Mucosa of descending colon (tissue), 3 donors: ENCODE measurements at regions of chr14 and their contacts with region 1.

Region 1: DNA sequence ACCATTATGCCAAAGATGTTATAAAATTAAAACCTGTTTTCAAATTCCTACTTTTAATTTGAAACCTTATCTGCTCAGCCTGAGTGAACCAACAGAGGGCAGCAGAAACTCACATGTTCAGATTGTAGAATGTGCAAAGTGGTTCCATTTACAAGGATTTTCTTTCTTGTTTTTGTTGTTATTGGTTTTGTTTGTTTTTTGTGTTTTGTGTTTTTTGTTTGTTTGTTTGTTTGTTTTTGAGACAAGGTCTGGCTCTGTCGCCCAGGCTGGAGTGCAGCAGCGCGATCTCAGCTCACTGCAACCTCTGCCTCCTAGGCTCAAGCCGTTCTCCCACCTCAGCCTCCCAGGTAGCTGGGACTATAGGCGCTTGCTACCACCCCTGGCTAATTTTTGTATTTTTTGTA is 22.8 kb upstream of the GARIN2 start:
- DNase-seq: peak in 1 of 3 donors; percentile 73
- ATAC-seq: peak; percentile 58
- H3K4me3 ChIP-seq: no peak overlapping the region
- H3K4me1 ChIP-seq: no peaks in the 10 kb centered on the region
- CTCF ChIP-seq: peak; percentile 51

Region 2: DNA sequence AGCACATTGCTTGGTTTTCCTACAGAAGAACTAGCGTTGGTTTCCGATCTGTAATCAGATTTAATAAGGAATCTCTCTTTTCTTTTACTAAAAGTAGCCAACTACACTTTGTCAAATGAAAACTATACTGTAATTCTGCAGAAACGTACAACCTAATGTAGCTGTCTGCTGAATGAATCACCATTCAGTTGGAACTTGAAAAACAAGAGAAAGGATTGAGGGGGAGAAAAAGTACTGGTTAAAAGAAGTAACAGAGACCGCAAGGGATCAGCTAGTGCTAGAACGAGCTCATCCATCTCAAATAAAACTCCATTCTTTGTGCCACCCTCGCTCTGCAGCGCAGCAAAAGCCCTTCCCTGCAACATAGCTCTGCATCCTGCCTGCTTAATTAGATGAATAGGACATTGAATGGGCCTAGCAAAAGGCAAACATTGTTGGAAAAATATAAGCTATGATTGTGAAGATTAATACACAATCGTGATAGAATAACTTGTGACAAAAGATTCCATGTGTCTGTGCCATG is 25.4 kb after region 1 on chr14:
- intact Hi-C with region 1: no loop called
- DNase-seq: no peak
- ATAC-seq: no peak
- H3K4me3 ChIP-seq: no peak overlapping the region
- H3K4me1 ChIP-seq: no peaks in the 10 kb centered on the region
- CTCF ChIP-seq: no peak

Region 3: DNA sequence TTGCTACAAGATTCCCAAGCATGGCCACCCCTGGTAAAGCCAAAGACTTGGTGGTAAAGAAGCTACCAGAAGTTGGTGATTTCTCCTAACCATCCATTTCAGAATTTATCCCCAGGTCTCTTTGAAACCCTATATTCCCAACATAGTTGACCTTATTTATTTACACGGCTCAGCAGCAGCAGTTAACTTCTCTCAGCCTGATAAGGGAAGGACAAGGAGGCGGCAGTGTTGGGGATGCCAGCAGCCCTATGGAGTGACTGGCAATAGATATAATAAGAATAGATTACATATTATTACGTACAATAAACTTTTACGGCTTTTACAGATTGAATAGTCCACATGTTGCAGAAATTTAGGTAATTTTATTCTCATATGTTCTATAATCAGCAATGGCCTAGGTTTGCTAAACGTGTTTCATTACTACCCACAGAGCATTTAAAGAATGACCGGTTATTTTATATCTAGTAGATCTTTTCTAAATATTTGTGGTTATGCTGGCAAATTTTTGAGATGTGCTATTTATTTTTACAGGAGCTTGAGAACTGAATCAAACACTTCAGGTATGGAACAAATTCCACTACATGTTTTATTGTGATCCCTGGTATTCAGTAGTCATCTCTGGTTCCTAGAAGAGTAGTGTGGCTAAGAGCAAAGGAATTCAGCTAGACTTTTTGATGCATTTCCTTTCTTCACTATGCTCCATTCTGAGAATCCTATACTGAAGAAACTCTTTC is 55.0 kb after region 1 on chr14:
- intact Hi-C with region 1: no loop called
- DNase-seq: peak in 1 of 3 donors; percentile 44
- ATAC-seq: peak; percentile 85
- H3K4me3 ChIP-seq: no peak overlapping the region
- H3K4me1 ChIP-seq: peaks cover 10% of the 10 kb centered on the region
- CTCF ChIP-seq: no peak

Region 4: DNA sequence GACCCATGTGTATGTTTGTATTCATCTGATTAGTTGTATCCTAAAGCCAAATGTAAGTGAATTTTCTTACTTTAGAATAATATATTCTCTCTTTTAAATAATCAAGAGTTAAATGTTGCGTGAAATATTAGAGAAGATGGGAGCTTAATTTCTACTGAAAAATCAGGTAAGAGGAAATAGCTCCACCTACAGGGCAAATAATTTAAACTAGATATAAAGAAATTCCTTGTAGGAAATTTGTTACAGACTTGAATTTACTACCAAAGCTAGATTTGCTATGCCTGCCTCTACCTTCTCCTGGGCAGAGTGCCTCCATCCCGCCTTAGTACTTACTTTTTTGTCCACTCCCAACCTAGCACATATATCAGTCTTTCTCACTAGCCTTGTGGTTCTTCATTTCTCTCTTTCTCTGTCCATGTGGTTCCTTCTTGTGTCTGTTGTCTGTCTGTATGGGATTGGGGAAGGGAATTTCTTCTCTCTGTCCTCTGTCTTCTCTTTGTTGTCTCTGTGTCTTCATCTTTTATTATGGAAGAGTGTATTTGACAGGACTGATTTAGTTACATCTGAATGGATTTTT is 119.5 kb after region 1 on chr14:
- intact Hi-C with region 1: loop called (anchors 5 kb)
- DNase-seq: no peak
- ATAC-seq: no peak
- H3K4me3 ChIP-seq: no peak overlapping the region
- H3K4me1 ChIP-seq: no peaks in the 10 kb centered on the region
- CTCF ChIP-seq: no peak